ENCODE measurements at regions of chr2 and their contacts with region 1.

Region 1: GRCh38 chr2:229974266-229974665 is 52.0 kb downstream of the FBXO36 start:
- DNase-seq: no peak
- H3K4me3 Mint-ChIP-seq: no peak overlapping the region
- H3K27ac Mint-ChIP-seq: no peak overlapping the region
- H3K4me1 Mint-ChIP-seq: no peaks in the 10 kb centered on the region
- H3K27me3 Mint-ChIP-seq: no peaks in the 10 kb centered on the region
- CTCF ChIP-seq: no peak

Region 2: DNA sequence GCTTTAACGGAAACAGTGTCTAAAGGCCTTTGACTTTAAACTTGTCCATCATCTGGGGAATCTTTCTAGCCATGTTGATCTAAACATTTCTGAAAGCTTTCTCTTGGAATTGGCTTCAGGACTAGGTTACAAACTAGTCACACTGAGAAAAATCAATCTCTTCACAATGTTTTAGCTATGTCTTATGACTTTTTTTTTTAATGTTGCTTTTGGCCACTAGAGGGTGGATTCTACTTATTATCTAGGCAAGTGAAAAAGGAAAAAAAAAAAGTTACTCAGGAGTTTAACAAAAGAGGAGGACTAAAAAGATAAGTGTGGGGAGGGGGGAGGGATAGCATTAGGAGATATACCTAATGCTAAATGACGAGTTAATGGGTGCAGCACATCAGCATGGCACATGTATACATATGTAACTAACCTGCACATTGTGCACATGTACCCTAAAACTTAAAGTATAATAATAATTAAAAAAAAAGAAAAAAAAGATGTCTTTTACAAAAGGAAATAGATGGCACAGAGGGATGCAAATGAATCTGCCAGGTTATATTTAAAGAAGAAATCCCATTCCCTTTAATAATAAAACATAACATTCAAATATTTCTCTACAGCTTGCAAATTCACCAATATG is 542.8 kb before region 1 on chr2:
- CTCF ChIA-PET with region 1: no interaction called
- intact Hi-C with region 1: no loop called
- DNase-seq: no peak
- H3K4me3 Mint-ChIP-seq: no peak overlapping the region
- H3K27ac Mint-ChIP-seq: no peak overlapping the region
- H3K4me1 Mint-ChIP-seq: peaks cover 5% of the 10 kb centered on the region
- H3K27me3 Mint-ChIP-seq: no peaks in the 10 kb centered on the region
- CTCF ChIP-seq: peak; percentile 19

Region 3: GRCh38 chr2:229921892-229922445 is 52.3 kb before region 1 on chr2 and contains the start of gene TRIP12:
- CTCF ChIA-PET with region 1: interaction called, 16 read pairs
- intact Hi-C with region 1: no loop called
- DNase-seq: peak; percentile 96
- H3K4me3 Mint-ChIP-seq: peak within 1 kb of the TSS; percentile 95
- H3K27ac Mint-ChIP-seq: peak within 1 kb of the TSS; percentile 87
- H3K4me1 Mint-ChIP-seq: peaks cover 18% of the 10 kb centered on the region
- H3K27me3 Mint-ChIP-seq: no peaks in the 10 kb centered on the region
- CTCF ChIP-seq: no peak
- total RNA-seq, gene TRIP12: 247 and 252 TPM in 2 replicates

Region 4: DNA sequence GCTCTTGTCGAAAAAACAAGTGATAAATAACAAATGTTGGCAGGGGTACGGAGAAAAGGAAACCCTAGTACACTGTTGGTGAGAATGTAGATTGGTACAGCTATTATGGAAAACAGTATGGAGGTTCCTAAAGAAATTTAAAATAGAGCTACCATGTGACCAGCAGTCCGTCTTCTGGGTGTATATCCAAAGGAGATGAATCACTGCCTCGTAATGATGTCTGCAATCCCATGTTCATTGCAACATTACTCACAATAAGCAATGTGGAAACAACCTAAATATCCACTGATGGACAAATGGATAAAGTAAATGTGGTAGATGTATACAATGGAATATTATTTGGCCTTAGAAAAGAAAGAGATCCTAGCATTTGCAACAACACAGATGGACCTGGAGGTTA is 43.9 kb after region 1 on chr2:
- CTCF ChIA-PET with region 1: no interaction called
- intact Hi-C with region 1: no loop called
- DNase-seq: no peak
- H3K4me3 Mint-ChIP-seq: no peak overlapping the region
- H3K27ac Mint-ChIP-seq: no peak overlapping the region
- H3K4me1 Mint-ChIP-seq: no peaks in the 10 kb centered on the region
- H3K27me3 Mint-ChIP-seq: peaks cover 19% of the 10 kb centered on the region
- CTCF ChIP-seq: no peak

Measured in Calu3 (cell line).